ENCODE measurements at regions of chr17 and their contacts with region 1.

Region 1: GRCh38 chr17:68172461-68172954 is 75.3 kb upstream of the AMZ2 start:
- DNase-seq: no peak
- CTCF ChIP-seq: peak; percentile 97

Region 2: DNA sequence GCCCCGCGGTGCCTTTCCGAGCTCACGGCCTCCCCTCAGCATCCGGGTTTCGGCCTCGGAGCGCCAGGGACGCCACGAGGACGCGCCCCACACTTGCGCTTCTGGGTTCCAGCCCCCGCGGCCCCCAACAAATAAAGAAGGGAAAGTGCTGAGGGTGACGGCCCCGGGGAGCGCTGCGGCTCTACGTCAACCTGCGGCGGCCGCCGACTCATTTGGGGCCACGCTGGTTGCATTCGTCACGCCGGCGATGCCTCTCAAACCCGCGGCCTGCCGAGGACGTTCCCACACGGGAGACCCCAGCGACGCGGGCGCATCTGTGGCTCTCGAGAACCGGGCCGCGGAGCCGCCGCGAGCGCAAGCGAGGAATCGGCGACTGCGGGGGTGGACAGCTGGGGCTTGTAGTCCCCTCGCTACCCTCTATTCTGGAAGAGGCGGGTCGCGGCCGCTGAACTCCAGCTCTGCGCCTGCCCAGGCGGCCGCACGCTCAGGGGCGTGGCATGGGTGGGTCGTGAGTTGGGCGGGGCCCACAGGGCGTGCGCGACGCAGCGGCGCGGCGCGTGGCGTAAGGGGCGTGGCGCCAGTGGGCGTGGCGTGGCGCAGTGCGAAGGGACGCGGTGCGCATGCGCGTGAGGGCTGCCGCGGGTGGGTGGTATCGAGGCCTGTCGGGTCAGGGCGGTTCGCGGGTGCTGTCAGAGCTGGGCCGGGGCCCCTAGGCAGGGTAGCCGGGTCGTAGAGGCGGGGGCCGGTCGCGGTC is 75.1 kb after region 1 on chr17 and contains the start of gene AMZ2:
- in situ Hi-C with region 1: no loop called
- DNase-seq: peak; percentile 94
- CTCF ChIP-seq: no peak

Region 3: DNA sequence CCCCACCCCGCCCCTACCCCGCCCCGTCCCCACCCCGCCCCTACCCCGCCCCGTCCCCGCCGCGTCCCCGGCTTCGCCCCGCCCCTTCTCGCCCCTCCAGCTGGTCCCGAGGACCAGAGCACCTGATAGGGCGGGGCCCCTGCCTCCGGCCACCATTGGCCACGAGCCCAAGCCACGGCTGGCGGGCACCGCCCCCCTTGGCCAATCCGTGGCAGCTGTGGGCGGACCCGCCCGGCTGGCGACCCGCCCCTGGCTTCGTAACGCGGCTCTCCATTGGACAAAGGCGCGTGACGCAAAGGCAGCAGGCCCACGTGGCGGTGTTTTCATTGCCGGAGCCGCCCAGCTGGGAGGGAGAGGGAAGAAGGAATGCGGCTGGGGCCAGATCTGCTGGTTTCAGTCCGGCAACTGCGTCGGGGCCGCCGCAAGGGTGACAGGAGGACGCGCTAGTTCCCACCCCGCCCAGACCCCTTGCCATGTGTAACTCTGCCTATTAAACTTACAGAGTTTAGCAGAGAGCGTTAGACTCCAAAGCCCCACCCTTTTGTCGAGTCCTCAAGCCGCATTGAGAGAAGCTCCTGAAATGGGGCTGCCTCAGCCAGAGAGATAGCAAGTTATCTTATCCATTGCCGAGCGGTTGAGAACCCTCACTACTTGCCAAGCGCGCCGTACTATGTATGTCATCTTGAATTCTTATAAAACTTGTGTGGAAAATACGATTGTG is 285.2 kb after region 1 on chr17:
- in situ Hi-C with region 1: loop called (anchors 25 kb)
- DNase-seq: peak; percentile 98
- CTCF ChIP-seq: no peak

Measured in GM13977 (cell line).